ENCODE measurements at regions of chr1 and their contacts with region 1.

Region 1: GRCh38 chr1:77421504-77422233 is 139.8 kb downstream of the AK5 start:
- DNase-seq: peak in 4 of 5 donors; percentile 29 to 46 (median 39)
- H3K4me3 ChIP-seq: no peak overlapping the region
- H3K4me3 Mint-ChIP-seq: peak overlapping the region in 7 of 8 donors; percentile 60 to 78 (median 69)
- H3K27ac ChIP-seq: no peak overlapping the region
- H3K27ac Mint-ChIP-seq: peak overlapping the region; percentile 15 to 84 (median 70)
- H3K4me1 ChIP-seq: peaks cover 28% of the 10 kb centered on the region
- H3K4me1 Mint-ChIP-seq: peaks cover 36 to 61% (median 47%) of the 10 kb centered on the region in 4 donors
- H3K27me3 ChIP-seq: no peaks in the 10 kb centered on the region
- H3K27me3 Mint-ChIP-seq: no peaks in the 10 kb centered on the region

Region 2: DNA sequence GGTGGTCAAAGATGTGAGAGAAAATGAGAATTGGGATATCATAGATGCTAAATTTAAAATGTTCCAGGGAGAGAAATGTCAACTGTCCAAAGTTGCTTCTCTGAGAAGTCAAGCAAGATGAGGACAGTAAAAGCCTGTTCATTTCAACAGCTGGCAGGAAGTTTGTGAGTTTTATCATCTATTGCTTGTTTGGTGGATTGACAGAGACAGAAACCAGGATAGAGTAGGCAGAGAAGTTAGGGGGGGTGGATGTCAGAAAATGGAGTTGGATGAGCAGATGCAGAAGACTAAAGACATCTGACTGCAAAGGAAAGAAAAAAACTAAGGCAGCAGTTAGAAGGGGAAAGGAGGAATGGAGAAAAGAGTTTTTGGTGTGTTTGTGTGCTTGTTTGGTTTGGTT is 61.4 kb before region 1 on chr1:
- CTCF ChIA-PET with region 1: no interaction called
- POLR2A ChIA-PET with region 1: no interaction called
- intact Hi-C with region 1: no loop called
- DNase-seq: no peak
- H3K4me3 ChIP-seq: no peak overlapping the region
- H3K4me3 Mint-ChIP-seq: no peak overlapping the region
- H3K27ac ChIP-seq: no peak overlapping the region
- H3K27ac Mint-ChIP-seq: peak overlapping the region in 5 of 7 donors; percentile 0 to 24 (median 7)
- H3K4me1 ChIP-seq: no peaks in the 10 kb centered on the region
- H3K4me1 Mint-ChIP-seq: peaks cover 0 to 10% (median 6%) of the 10 kb centered on the region in 4 donors
- H3K27me3 ChIP-seq: no peaks in the 10 kb centered on the region
- H3K27me3 Mint-ChIP-seq: no peaks in the 10 kb centered on the region

Region 3: GRCh38 chr1:77378723-77379535 is 42.7 kb before region 1 on chr1:
- CTCF ChIA-PET with region 1: no interaction called
- POLR2A ChIA-PET with region 1: interaction called, 3 read pairs
- intact Hi-C with region 1: loop called (anchors 5 kb)
- DNase-seq: no peak
- H3K4me3 ChIP-seq: no peak overlapping the region
- H3K4me3 Mint-ChIP-seq: no peak overlapping the region
- H3K27ac ChIP-seq: no peak overlapping the region
- H3K27ac Mint-ChIP-seq: peak overlapping the region in 1 of 7 donors; percentile 10
- H3K4me1 ChIP-seq: no peaks in the 10 kb centered on the region
- H3K4me1 Mint-ChIP-seq: peaks cover 8 to 20% (median 10%) of the 10 kb centered on the region in 4 donors
- H3K27me3 ChIP-seq: no peaks in the 10 kb centered on the region
- H3K27me3 Mint-ChIP-seq: no peaks in the 10 kb centered on the region

Measured in CD4-positive, alpha-beta memory T cell (primary cell).